ENCODE measurements at regions of chr12 and their contacts with region 1.

Region 1: DNA sequence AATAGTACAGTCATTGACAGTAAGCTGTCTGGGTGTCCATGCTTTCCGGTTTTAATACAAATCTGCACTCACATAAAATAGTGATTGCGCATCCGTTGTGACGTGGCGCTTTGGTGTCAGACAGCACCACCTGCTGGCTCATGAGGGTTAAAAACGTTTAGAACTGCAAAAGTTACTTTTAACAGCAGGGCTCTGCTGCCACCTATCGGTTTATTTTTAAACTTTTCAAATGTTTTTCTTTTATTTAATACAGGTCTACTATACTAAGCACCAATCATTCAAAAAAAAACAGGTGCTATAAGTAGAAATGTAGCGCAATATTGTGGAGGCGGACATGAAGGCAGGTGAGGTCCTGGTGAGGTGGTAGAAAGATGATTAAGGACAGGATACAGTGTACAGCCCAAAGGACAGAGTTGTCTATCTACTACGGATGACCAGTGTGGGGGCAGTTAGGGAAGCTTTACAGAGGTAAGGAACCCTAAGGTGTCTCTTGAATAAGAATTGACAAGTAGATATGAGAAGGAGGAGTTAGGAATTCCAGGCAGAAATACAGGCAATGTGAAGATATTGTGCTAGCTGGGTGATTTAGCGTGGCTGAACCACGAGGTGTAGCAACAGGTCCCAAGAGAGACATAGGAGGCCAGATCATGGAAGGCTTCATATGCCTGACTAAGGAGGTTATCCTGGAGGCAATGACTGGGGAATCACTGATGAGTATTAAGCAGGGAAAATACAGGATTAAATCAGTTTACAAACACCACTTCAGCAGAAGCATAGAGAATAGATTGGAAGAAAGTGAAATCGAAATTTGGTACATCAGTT is 91.5 kb upstream of the PRB2 start:
- DNase-seq: peak; percentile 60
- H3K4me3 ChIP-seq: no peak overlapping the region
- H3K27ac ChIP-seq: no peak overlapping the region
- H3K4me1 ChIP-seq: no peaks in the 10 kb centered on the region
- H3K27me3 ChIP-seq: no peaks in the 10 kb centered on the region
- CTCF ChIP-seq: peak; percentile 93

Region 2: GRCh38 chr12:10130042-10130441 is 1356.8 kb before region 1 on chr12 and contains the start of gene CLEC7A:
- CTCF ChIA-PET with region 1: no interaction called
- dilution Hi-C with region 1: no loop called
- in situ Hi-C with region 1: no loop called
- intact Hi-C with region 1: no loop called
- DNase-seq: peak; percentile 52
- H3K4me3 ChIP-seq: no peak within 1 kb of the TSS
- H3K27ac ChIP-seq: no peak within 1 kb of the TSS
- H3K4me1 ChIP-seq: peaks cover 8% of the 10 kb centered on the region
- H3K27me3 ChIP-seq: no peaks in the 10 kb centered on the region
- CTCF ChIP-seq: no peak
- total RNA-seq, gene CLEC7A: not detected

Region 3: DNA sequence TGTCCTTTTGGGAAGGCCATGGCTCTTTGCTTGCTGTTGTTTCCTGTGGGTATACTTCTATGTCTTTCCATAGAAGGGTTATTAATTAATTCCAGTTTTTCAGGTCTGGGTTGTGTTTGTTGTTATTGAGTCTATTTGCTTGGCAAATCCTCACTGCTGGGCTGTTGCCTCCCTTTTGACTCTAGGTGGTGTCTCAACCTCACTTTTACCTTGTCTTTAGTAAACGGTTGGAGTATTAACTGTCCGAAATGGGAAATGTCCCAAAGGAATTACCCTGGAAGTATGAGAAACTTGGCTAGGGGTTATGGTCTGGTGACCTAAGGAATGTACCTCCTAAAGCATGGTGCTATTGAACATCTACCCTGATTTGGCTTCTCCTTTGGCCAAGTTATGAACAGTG is 619.5 kb before region 1 on chr12:
- CTCF ChIA-PET with region 1: no interaction called
- dilution Hi-C with region 1: no loop called
- in situ Hi-C with region 1: no loop called
- intact Hi-C with region 1: loop called (anchors 2 kb)
- DNase-seq: no peak
- H3K4me3 ChIP-seq: no peak overlapping the region
- H3K27ac ChIP-seq: no peak overlapping the region
- H3K4me1 ChIP-seq: no peaks in the 10 kb centered on the region
- H3K27me3 ChIP-seq: no peaks in the 10 kb centered on the region
- CTCF ChIP-seq: peak; percentile 15 to 37

Region 4: DNA sequence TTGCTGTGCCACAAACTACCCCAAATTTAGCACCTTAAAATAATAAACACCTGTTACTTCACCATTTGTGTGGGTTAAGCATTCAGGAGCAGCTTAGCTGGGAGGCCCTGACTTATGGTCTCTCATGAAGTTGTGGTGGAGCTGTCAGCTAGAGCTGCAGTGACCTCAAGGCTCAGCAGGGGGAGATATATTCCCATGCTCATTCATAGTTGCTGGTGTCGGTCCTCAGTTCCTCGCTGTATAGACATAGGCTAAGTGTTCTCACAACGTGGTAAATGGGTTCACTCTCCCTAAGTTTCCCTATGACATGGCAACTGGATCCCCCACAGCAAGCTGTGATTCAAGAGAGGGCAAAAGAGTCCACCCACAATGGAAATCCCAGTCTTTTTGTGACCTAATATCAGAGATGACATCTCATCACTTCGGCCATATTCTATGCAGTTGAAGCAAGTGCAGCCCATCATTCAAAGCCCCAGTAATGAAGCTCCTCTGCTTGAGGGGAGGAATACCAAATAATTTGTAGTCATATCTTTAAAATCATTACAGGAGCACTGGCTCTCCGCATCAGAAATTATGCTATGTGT is 258.4 kb before region 1 on chr12:
- CTCF ChIA-PET with region 1: interaction called, 3 read pairs
- dilution Hi-C with region 1: loop called (anchors 5 kb)
- in situ Hi-C with region 1: loop called (anchors 5 kb)
- intact Hi-C with region 1: loop called (anchors 1 kb)
- DNase-seq: peak; percentile 39
- H3K4me3 ChIP-seq: no peak overlapping the region
- H3K27ac ChIP-seq: no peak overlapping the region
- H3K4me1 ChIP-seq: no peaks in the 10 kb centered on the region
- H3K27me3 ChIP-seq: no peaks in the 10 kb centered on the region
- CTCF ChIP-seq: peak; percentile 91 to 93

Region 5: GRCh38 chr12:11233532-11233931 is 253.3 kb before region 1 on chr12:
- CTCF ChIA-PET with region 1: interaction called, 3 read pairs
- dilution Hi-C with region 1: loop called (anchors 5 kb)
- in situ Hi-C with region 1: loop called (anchors 5 kb)
- intact Hi-C with region 1: loop called (anchors 1 kb)
- DNase-seq: no peak
- H3K4me3 ChIP-seq: no peak overlapping the region
- H3K27ac ChIP-seq: no peak overlapping the region
- H3K4me1 ChIP-seq: no peaks in the 10 kb centered on the region
- H3K27me3 ChIP-seq: no peaks in the 10 kb centered on the region
- CTCF ChIP-seq: no peak